ENCODE measurements at regions of chr16 and their contacts with region 1.

Region 1: DNA sequence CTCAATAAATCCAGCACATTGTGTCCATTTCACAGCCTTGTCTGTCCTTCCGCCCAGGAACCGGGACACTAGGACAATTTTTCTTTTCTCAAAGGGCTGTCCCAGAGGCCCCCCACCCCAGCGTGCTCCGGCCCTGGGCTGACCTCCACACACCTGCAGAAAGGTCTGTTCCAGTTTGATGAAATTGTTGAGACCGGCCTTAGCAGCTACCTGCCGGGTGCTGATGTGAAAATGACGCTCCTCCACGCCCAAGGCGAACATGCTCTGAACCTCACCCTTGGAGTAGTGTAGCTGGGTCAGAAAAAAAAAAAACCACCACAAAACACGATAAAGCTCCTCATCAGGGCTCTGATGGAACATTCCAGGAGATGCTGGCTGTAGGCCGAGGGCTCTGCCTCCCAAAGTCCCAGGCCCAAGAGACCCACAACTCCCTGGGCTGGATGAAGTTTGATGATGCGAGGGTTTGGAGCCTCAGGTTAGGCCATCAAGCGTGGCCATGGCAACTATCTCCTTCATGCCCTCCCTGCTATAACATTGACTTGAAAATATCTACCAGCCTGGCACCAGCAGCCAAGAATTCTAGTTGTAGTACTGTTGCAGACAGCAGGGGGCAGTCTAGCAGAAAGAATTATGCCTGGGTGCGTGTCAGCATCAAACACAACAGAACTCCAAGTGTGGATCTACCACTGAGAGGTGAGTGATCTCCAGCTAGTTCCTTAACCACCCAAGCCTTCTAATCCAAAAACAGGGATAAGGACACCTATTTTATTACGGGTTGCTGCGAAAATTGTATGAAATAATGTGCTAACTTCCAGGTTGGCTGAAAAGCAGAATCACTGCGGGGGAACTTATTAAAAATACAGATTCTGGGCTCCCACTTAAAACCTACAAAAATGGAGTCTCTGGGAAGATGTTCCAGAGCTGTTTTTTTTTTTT is 62.1 kb downstream of the RMI2 start:
- DNase-seq: no peak
- ATAC-seq: peak; percentile 45

Region 2: GRCh38 chr16:11497851-11498289 is 90.6 kb after region 1 on chr16:
- intact Hi-C with region 1: loop called (anchors 10 kb)
- DNase-seq: no peak
- ATAC-seq: no peak

Measured in Right ventricle myocardium inferior (tissue), 1 donor.